ENCODE measurements at regions of chr15 and their contacts with region 1.

Region 1: GRCh38 chr15:51776952-51777574 is 25.7 kb downstream of the TMOD2 start:
- DNase-seq: peak; percentile 76
- H3K4me3 Mint-ChIP-seq: no peak overlapping the region
- H3K27ac Mint-ChIP-seq: no peak overlapping the region
- H3K4me1 Mint-ChIP-seq: peaks cover 4% of the 10 kb centered on the region
- H3K27me3 Mint-ChIP-seq: no peaks in the 10 kb centered on the region

Region 2: DNA sequence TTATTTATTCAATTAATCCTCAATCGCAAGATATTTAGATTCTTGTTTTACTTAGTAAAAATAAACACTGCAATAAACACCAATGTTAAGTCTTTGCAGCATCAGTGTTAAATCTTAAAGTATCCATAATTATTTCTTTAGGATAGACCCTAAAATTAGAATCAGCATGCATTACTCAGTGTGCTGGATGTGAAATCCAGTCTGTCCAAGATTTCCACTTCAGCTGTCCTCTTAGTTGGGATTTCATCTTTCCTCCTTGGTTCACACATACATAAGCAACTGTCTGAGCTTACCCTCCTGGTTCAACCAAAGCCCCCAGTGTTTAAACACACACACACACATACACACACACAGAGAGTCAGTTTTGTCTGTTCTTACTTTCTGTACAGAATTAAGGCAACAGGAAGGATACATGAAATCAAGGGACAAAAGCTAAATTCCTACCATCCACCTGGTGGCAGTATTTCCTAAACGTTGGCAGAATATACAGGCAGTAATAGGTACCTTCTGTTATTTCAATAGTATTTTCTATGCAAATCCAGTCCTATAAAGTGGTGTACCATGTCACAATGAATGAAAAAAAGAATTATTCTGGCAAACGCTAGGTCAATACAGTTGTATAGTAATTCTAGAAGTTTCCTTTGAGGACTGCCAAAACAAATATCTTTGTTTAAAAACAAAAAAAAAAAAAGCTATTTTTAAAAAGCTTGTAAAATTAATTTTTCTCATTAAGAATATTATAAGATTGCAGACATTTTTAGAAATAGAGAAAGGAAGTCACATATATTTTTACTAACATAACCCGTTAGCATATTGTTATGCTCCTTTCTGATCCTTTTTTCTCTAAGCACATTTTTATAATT is 127.2 kb before region 1 on chr15:
- CTCF ChIA-PET with region 1: interaction called, 190 read pairs
- DNase-seq: peak; percentile 58
- H3K4me3 Mint-ChIP-seq: no peak overlapping the region
- H3K27ac Mint-ChIP-seq: no peak overlapping the region
- H3K4me1 Mint-ChIP-seq: no peaks in the 10 kb centered on the region
- H3K27me3 Mint-ChIP-seq: peaks cover 13% of the 10 kb centered on the region

Region 3: GRCh38 chr15:51658670-51659069 is 118.4 kb before region 1 on chr15:
- CTCF ChIA-PET with region 1: interaction called, 18 read pairs
- DNase-seq: no peak
- H3K4me3 Mint-ChIP-seq: no peak overlapping the region
- H3K27ac Mint-ChIP-seq: no peak overlapping the region
- H3K4me1 Mint-ChIP-seq: no peaks in the 10 kb centered on the region
- H3K27me3 Mint-ChIP-seq: peaks cover 8% of the 10 kb centered on the region

Region 4: GRCh38 chr15:51688863-51689262 is 88.2 kb before region 1 on chr15:
- CTCF ChIA-PET with region 1: interaction called, 20 read pairs
- DNase-seq: no peak
- H3K4me3 Mint-ChIP-seq: no peak overlapping the region
- H3K27ac Mint-ChIP-seq: no peak overlapping the region
- H3K4me1 Mint-ChIP-seq: peaks cover 29% of the 10 kb centered on the region
- H3K27me3 Mint-ChIP-seq: peaks cover 40% of the 10 kb centered on the region

Region 5: DNA sequence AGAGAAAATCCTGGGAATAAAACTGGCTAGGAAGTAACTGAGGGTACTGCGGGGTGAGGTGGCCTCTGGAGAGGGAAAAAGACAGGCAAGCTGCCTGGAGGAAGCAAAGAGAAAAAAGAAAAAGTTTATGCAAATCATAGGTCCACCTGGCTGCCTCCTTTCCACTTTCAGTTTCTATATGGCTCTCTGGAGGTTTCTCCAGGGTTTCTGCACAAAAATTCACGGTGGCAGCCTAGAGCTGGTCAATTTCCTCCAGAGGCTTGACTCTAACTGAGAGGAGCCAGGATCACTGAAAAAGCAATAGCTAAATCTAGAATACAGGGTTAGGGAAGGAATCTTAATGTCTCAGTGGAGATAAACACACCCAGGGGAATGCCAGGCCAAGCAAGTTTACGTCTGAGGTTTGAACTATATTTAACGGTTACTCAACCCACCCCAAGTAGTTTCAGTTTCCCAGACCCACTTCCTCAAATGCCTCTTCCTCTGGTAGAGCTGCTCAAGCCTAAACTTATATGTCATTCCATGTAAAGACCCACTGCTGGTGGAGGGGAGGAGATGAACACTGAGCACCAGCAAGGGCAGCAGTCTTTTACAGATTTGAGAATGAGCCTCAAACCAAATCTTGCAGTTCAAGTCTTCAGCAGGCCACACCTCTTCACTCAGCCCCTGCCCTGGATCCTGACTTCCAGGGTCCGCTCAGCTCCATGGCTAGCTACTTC is 45.4 kb before region 1 on chr15:
- CTCF ChIA-PET with region 1: interaction called, 50 read pairs
- DNase-seq: peak; percentile 54
- H3K4me3 Mint-ChIP-seq: peak overlapping the region; percentile 72
- H3K27ac Mint-ChIP-seq: peak overlapping the region; percentile 95
- H3K4me1 Mint-ChIP-seq: peaks cover 65% of the 10 kb centered on the region
- H3K27me3 Mint-ChIP-seq: no peaks in the 10 kb centered on the region

Region 6: DNA sequence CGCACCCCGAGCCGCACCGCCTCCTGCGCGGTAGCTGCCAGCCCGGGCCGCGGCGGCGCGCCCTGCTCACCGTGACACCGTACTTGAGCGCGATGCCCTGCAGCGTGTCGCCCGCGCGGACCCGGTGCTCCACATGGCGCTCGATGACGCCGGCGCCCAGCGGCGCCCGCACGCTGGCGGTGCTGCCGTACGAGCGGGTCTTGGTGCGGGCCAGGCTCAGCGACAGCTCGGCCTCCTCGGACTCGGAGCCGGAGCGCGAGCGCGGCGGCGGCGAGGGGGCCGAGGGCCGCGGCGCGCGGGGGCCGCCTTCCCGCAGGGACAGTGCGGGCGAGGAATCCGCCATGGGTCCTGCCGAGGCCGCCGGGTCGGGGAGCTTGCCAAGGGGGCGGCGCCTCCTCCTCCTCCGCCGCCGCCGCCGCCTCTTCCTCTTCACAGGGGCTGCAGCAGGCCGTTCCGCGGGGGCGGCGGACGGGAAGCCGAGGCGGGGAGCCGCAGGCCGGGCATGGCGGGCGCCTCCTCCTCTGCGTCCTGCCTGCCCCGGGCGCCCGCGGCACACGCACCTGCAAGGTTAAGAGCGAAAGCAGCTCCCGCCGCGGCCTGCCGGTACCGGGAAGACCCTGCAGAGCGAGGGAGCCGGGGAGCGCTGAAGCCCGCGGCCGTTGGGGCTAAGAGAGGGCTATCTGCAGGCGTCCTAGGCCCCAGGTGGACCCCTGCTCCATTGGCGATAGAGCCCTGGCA is 39.6 kb before region 1 on chr15 and contains the start of gene LYSMD2:
- CTCF ChIA-PET with region 1: interaction called, 50 read pairs
- DNase-seq: peak; percentile 76
- H3K4me3 Mint-ChIP-seq: peak within 1 kb of the TSS; percentile 84
- H3K27ac Mint-ChIP-seq: peak within 1 kb of the TSS; percentile 91
- H3K4me1 Mint-ChIP-seq: peaks cover 53% of the 10 kb centered on the region
- H3K27me3 Mint-ChIP-seq: no peaks in the 10 kb centered on the region

Region 7: DNA sequence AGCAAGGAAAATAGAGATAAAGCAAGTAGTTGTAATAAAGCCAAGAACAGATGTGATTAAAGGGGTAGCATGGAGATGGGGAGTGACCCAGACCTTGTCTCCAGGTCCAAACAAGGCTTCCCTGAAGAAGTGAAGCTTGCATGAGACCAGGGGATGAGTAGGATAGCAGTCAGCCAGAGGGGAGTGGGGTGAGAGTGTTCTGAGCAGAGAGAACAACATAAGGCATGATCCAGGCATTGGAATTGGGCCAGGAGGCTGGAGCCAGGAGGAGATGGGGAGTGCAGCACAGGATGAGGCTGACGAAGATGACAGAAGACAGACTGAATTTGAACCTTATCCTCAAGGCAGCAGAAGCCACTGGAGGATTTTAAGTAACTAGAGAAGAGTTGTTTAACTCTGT is 18.4 kb before region 1 on chr15:
- CTCF ChIA-PET with region 1: interaction called, 19 read pairs
- DNase-seq: no peak
- H3K4me3 Mint-ChIP-seq: no peak overlapping the region
- H3K27ac Mint-ChIP-seq: no peak overlapping the region
- H3K4me1 Mint-ChIP-seq: peaks cover 21% of the 10 kb centered on the region
- H3K27me3 Mint-ChIP-seq: peaks cover 1% of the 10 kb centered on the region